ENCODE measurements at regions of chr14 and their contacts with region 1.

Region 1: GRCh38 chr14:21257394-21257909 is 11.8 kb downstream of the HNRNPC start:
- DNase-seq: peak; percentile 41
- ATAC-seq: peak; percentile 18
- H3K4me3 Mint-ChIP-seq: peak overlapping the region; percentile 62
- H3K27ac Mint-ChIP-seq: peak overlapping the region; percentile 79
- H3K4me1 Mint-ChIP-seq: peaks cover 68% of the 10 kb centered on the region
- H3K27me3 Mint-ChIP-seq: no peaks in the 10 kb centered on the region

Region 2: GRCh38 chr14:21241218-21241819 is 16.1 kb before region 1 on chr14:
- CTCF ChIA-PET with region 1: interaction called, 11 read pairs
- DNase-seq: no peak
- ATAC-seq: no peak
- H3K4me3 Mint-ChIP-seq: no peak overlapping the region
- H3K27ac Mint-ChIP-seq: peak overlapping the region; percentile 26
- H3K4me1 Mint-ChIP-seq: peaks cover 64% of the 10 kb centered on the region
- H3K27me3 Mint-ChIP-seq: no peaks in the 10 kb centered on the region

Region 3: GRCh38 chr14:21275261-21275858 is 17.9 kb after region 1 on chr14:
- CTCF ChIA-PET with region 1: no interaction called
- DNase-seq: peak; percentile 19
- ATAC-seq: no peak
- H3K4me3 Mint-ChIP-seq: no peak overlapping the region
- H3K27ac Mint-ChIP-seq: no peak overlapping the region
- H3K4me1 Mint-ChIP-seq: peaks cover 4% of the 10 kb centered on the region
- H3K27me3 Mint-ChIP-seq: no peaks in the 10 kb centered on the region

Measured in activated CD8-positive, alpha-beta memory T cell treated with anti-CD3 and anti-CD28 coated beads, Interleukin-2, amount 10 ng/mL, durations not matched to agents 7 days and 5 days (primary cell).